Activated naive CD4-positive, alpha-beta T cell treated with anti-CD3 and anti-CD28 coated beads for 36 hours (primary cell): ENCODE measurements at regions of chr21 and their contacts with region 1.

Region 1: GRCh38 chr21:34745557-34746255 is 76.9 kb downstream of the CLIC6 start:
- DNase-seq: peak; percentile 74
- H3K4me3 Mint-ChIP-seq: peak overlapping the region; percentile 47
- H3K27ac Mint-ChIP-seq: peak overlapping the region; percentile 54
- H3K4me1 Mint-ChIP-seq: peaks cover 4% of the 10 kb centered on the region
- H3K27me3 Mint-ChIP-seq: no peaks in the 10 kb centered on the region

Region 2: GRCh38 chr21:34579411-34579810 is 166.3 kb before region 1 on chr21:
- CTCF ChIA-PET with region 1: no interaction called
- intact Hi-C with region 1: no loop called
- DNase-seq: no peak
- H3K4me3 Mint-ChIP-seq: no peak overlapping the region
- H3K27ac Mint-ChIP-seq: no peak overlapping the region
- H3K4me1 Mint-ChIP-seq: peaks cover 5% of the 10 kb centered on the region
- H3K27me3 Mint-ChIP-seq: no peaks in the 10 kb centered on the region

Region 3: GRCh38 chr21:35840197-35840799 is 1094.6 kb after region 1 on chr21:
- CTCF ChIA-PET with region 1: interaction called, 21 read pairs
- intact Hi-C with region 1: loop called (anchors 1 kb)
- DNase-seq: peak; percentile 74
- H3K4me3 Mint-ChIP-seq: no peak overlapping the region
- H3K27ac Mint-ChIP-seq: no peak overlapping the region
- H3K4me1 Mint-ChIP-seq: peaks cover 3% of the 10 kb centered on the region
- H3K27me3 Mint-ChIP-seq: no peaks in the 10 kb centered on the region